ENCODE measurements at regions of chr11 and their contacts with region 1.

Region 1: DNA sequence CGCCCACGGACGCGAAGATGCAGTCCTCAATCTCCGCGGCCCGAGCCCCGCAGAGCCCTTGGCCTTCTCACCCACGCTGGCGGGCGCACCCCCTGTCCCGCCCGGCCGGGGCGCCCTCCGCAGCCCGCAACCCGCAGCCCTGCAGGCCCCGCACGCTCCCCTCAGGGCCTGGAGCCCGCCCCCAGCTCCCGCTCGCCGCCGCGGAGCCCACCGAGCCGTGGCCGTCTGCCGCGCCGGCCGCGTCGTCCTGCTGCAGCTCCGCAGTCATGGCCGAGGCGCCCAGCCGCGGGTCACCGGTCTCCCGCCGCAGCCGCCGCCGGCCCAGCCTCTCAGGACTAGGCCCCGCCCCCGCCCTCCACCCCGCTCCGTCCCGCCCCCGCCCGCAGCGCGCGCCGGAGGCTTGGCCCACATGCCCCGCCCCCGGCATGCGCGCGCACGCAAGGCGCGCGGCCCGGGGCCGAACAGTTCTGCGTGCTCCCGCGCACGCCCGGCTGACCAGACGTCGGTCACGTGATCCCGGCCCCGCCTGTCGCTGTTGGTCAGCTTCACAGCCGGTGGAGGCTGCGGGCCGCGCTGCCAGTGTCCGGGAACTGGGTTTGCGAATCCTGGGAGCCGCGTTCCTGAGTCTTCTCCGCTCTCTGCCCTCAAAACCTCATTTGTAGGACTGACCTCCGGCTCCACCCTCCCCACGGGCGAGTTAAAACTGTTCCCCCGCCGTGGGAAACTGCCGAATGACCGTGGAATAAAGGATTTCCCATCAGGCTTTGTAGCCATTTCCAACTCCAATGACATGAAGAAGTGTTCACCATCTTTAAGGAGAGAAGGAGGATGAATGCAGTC is at the start of gene USP28:
- DNase-seq: peak; percentile 27 to 87 (median 63)
- ATAC-seq: peak; percentile 85 to 91 (median 89)
- H3K4me3 ChIP-seq: peak within 1 kb of the TSS; percentile 89 to 90
- H3K4me3 Mint-ChIP-seq: peak within 1 kb of the TSS; percentile 97 to 99 (median 98)
- H3K27ac ChIP-seq: peak within 1 kb of the TSS; percentile 90
- H3K27ac Mint-ChIP-seq: peak within 1 kb of the TSS; percentile 98 to 99
- H3K4me1 ChIP-seq: peaks cover 4 to 37% of the 10 kb centered on the region in 2 experiments
- H3K4me1 Mint-ChIP-seq: peaks cover 39 to 54% (median 48%) of the 10 kb centered on the region in 3 donors
- H3K27me3 ChIP-seq: no peaks in the 10 kb centered on the region
- H3K27me3 Mint-ChIP-seq: no peaks in the 10 kb centered on the region
- total RNA-seq, gene USP28: 16.8 to 28.5 (median 22.9) TPM

Region 2: DNA sequence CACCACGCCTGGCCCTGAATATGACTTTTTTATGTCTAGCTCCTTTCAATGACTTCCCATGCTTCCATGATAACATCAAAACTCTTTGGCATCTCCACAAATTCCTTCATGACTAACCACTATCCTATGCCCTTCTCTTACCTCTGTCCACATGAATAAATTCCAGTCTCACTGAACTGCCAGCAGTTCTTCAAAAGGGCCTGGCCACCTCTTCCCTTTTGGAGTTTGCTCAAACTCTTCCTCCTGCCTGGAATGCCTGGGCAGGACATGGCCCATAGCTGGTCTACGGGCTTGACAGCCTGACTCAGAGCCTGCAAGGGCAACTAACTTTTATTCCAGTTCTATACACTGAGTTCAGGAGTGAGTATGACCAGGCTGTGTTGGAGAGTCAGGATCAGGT is 142.3 kb after region 1 on chr11:
- CTCF ChIA-PET with region 1: no interaction called
- POLR2A ChIA-PET with region 1: interaction called in 1 of 2 experiments, 12 read pairs
- DNase-seq: no peak
- ATAC-seq: no peak
- H3K4me3 ChIP-seq: no peak overlapping the region
- H3K4me3 Mint-ChIP-seq: no peak overlapping the region
- H3K27ac ChIP-seq: no peak overlapping the region
- H3K27ac Mint-ChIP-seq: no peak overlapping the region
- H3K4me1 ChIP-seq: no peaks in the 10 kb centered on the region
- H3K4me1 Mint-ChIP-seq: no peaks in the 10 kb centered on the region
- H3K27me3 ChIP-seq: peaks cover 2 to 4% of the 10 kb centered on the region in 2 experiments
- H3K27me3 Mint-ChIP-seq: peaks cover 2% of the 10 kb centered on the region in 2 donors

Region 3: GRCh38 chr11:114282488-114282887 is 407.0 kb after region 1 on chr11:
- CTCF ChIA-PET with region 1: interaction called in 1 of 2 experiments, 17 read pairs
- POLR2A ChIA-PET with region 1: no interaction called
- DNase-seq: no peak
- ATAC-seq: no peak
- H3K4me3 ChIP-seq: no peak overlapping the region
- H3K4me3 Mint-ChIP-seq: no peak overlapping the region
- H3K27ac ChIP-seq: no peak overlapping the region
- H3K27ac Mint-ChIP-seq: no peak overlapping the region
- H3K4me1 ChIP-seq: no peaks in the 10 kb centered on the region
- H3K4me1 Mint-ChIP-seq: no peaks in the 10 kb centered on the region
- H3K27me3 ChIP-seq: peaks cover 3 to 18% of the 10 kb centered on the region in 2 experiments
- H3K27me3 Mint-ChIP-seq: peaks cover 14 to 16% of the 10 kb centered on the region in 2 donors

Region 4: DNA sequence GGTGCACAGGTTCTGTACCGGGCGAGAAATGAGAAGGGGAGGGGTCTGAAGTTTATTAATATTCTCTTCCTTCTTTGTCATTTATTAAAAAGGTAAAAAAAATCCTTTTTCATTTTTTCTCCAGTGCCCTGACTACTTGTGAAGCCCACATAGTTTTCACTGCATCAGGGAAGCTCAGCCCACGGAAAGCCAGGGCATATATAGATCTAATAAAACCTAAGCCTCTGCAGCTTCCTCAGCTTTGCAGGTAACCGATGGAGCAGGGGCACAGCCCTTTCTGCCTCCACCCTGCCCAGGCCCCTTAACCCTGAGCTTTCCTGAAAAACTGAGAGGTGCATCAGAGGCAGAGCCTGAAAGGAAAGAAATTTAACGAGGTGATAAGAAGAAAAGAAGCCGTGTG is 942.9 kb after region 1 on chr11:
- CTCF ChIA-PET with region 1: no interaction called
- POLR2A ChIA-PET with region 1: interaction called in 1 of 2 experiments, 11 read pairs
- DNase-seq: no peak
- ATAC-seq: no peak
- H3K4me3 ChIP-seq: no peak overlapping the region
- H3K4me3 Mint-ChIP-seq: no peak overlapping the region
- H3K27ac ChIP-seq: no peak overlapping the region
- H3K27ac Mint-ChIP-seq: no peak overlapping the region
- H3K4me1 ChIP-seq: no peaks in the 10 kb centered on the region
- H3K4me1 Mint-ChIP-seq: no peaks in the 10 kb centered on the region
- H3K27me3 ChIP-seq: peaks cover 0 to 13% of the 10 kb centered on the region in 2 experiments
- H3K27me3 Mint-ChIP-seq: peaks cover 0 to 4% of the 10 kb centered on the region in 2 donors